Activated CD8-positive, alpha-beta T cell treated with anti-CD3 and anti-CD28 coated beads for 36 hours (primary cell): ENCODE measurements at regions of chr17 and their contacts with region 1.

Region 1: DNA sequence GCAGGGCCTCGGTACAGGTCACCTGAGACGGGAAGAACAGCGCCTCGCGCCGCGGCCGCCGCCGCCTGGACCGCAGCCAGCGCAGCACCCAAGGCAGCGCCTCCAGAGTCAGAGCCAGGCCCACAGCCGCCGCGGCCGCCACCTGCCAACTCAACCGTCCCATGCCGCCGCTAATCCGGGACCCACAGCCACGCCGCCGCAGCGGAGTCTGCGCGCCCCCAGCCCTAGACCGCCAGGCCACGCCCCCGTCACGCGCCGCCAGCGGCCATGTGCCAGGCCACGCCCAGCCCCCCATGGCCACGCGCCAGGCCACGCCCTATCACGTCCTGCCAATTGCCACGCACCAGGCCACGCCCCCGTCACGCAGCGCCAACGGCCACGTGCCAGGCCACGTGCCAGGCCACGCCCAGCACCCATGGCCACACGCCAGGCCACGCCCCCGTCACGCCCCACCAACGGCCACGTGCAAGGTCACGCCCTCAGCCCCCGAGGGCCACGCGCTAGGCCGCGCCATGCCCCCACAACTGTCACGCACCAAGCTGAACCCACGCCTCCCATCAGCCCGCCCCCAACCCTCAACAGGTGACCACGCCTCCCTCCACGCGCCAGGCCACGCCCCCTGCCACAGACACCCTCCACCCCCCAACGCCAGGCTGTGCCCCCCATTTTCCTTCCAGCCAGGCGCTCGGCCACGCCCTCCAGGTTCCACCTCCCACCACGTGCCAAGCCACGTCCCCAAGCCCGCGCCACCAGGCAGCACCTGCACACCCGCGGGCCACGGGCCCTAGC is at the start of gene PLD6:
- DNase-seq: peak; percentile 92
- ATAC-seq: peak; percentile 78
- H3K4me3 Mint-ChIP-seq: peak within 1 kb of the TSS; percentile 93
- H3K27ac Mint-ChIP-seq: peak within 1 kb of the TSS; percentile 96
- H3K4me1 Mint-ChIP-seq: peaks cover 26% of the 10 kb centered on the region
- H3K27me3 Mint-ChIP-seq: no peaks in the 10 kb centered on the region
- CTCF ChIP-seq: no peak
- total RNA-seq, gene PLD6: 6.1 to 6.2 TPM

Region 2: DNA sequence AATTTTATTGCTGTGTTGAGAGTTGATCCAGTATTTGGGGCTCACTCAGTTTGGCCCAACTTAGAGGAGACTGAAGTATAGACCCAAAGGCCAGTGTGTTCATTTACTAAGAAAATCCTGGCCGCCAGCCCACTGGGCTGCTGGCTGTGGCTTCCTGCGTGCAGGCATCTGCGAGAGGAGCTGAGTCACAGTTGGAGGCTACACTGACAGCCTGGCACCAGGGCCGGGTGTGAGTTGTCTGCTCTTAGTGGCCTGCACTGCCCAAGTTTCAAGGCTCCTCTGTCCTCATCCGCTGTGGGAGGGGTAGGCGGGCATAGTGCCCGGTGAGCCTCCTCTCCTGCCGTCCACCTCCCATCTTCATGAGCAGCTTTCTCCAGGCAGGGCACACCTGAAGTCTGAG is 54.4 kb before region 1 on chr17:
- CTCF ChIA-PET with region 1: no interaction called
- POLR2A ChIA-PET with region 1: no interaction called
- intact Hi-C with region 1: no loop called
- DNase-seq: peak; percentile 24
- ATAC-seq: peak; percentile 58
- H3K4me3 Mint-ChIP-seq: no peak overlapping the region
- H3K27ac Mint-ChIP-seq: peak overlapping the region; percentile 44
- H3K4me1 Mint-ChIP-seq: peaks cover 25% of the 10 kb centered on the region
- H3K27me3 Mint-ChIP-seq: no peaks in the 10 kb centered on the region
- CTCF ChIP-seq: no peak

Region 3: DNA sequence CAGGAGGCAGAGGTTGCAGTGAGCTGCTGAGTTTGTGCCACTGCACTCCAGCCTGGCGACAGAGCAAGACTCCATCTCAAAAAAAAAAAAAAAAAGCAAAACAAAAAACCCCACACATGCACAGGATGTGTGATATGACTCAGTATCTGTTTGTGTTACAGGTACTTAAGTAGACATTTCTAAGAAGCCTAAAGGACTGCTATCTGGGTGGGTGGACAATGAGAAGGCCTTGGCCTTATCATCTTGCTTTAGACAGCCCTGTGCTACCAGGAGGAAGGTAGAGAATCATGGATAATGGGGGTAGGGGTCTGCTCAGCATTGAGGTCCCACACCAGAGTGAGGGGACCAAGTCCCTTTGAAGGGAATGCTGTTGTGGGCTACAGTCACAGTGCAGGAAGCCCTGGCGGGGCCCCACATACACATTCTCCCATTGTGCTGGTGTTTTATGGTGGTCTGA is 26.9 kb before region 1 on chr17:
- CTCF ChIA-PET with region 1: interaction called, 3 read pairs
- POLR2A ChIA-PET with region 1: interaction called, 12 read pairs
- intact Hi-C with region 1: no loop called
- DNase-seq: peak; percentile 42
- ATAC-seq: peak; percentile 81
- H3K4me3 Mint-ChIP-seq: peak overlapping the region; percentile 54
- H3K27ac Mint-ChIP-seq: peak overlapping the region; percentile 96
- H3K4me1 Mint-ChIP-seq: peaks cover 77% of the 10 kb centered on the region
- H3K27me3 Mint-ChIP-seq: no peaks in the 10 kb centered on the region
- CTCF ChIP-seq: no peak

Region 4: GRCh38 chr17:17237026-17237799 is 30.9 kb after region 1 on chr17 and contains the start of gene FLCN:
- CTCF ChIA-PET with region 1: no interaction called
- POLR2A ChIA-PET with region 1: interaction called, 11 read pairs
- intact Hi-C with region 1: no loop called
- DNase-seq: peak; percentile 91
- ATAC-seq: peak; percentile 92
- H3K4me3 Mint-ChIP-seq: peak within 1 kb of the TSS; percentile 90
- H3K27ac Mint-ChIP-seq: peak within 1 kb of the TSS; percentile 95
- H3K4me1 Mint-ChIP-seq: peaks cover 36% of the 10 kb centered on the region
- H3K27me3 Mint-ChIP-seq: no peaks in the 10 kb centered on the region
- CTCF ChIP-seq: no peak
- total RNA-seq, gene FLCN: 15.4 to 17.2 TPM